ENCODE measurements at regions of chr6 and their contacts with region 1.

Region 1: GRCh38 chr6:136226027-136226673 is 24.0 kb downstream of the MTFR2 start:
- DNase-seq: peak; percentile 70
- ATAC-seq: peak; percentile 82
- H3K4me3 Mint-ChIP-seq: no peak overlapping the region
- H3K27ac Mint-ChIP-seq: no peak overlapping the region
- H3K4me1 Mint-ChIP-seq: peaks cover 8% of the 10 kb centered on the region
- H3K27me3 Mint-ChIP-seq: no peaks in the 10 kb centered on the region

Region 2: DNA sequence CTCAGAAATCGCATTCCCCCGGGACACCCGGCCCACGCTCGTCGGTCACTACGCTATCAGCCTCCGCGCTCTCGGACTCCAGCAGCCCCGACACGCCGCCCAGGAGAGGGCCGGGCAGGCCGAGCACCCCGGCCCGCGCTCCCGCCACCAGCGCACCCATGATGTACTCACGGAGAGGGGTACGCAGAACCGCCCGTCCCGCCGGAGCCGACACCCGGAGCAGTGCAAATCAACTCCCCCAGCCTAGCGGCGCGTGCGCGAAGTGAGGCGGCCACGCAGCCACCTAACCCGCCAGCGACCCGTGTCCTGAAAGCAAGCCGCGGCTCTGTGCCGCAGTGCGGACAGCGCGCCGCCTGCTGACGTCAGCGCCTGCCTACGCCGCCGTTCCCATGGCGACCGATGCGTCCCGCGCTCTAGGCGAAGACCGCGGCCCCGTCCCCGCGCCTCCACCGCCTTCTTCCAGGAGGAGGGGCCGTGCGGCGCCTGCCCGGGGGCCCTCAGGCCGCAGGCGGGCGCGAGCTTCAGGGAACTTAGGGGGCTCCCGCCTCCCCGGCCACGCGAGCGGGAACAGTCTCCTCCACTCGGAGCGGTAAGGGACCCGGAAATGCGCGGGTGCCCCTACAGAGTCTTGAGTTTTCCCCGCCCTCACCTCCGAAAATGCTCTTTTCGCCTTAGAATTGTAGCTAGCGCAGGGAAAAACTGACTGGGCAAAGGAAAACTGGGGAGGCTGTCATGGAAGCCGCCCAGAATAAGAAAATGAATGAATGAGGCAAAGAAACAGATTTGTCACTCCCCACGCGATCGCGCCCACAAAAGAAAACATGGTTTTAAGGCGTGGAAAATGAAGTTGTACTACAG is 728.5 kb before region 1 on chr6 and contains the start of gene AHI1:
- CTCF ChIA-PET with region 1: interaction called, 16 read pairs
- POLR2A ChIA-PET with region 1: no interaction called
- DNase-seq: peak; percentile 88
- ATAC-seq: peak; percentile 84
- H3K4me3 Mint-ChIP-seq: no peak within 1 kb of the TSS
- H3K27ac Mint-ChIP-seq: no peak within 1 kb of the TSS
- H3K4me1 Mint-ChIP-seq: peaks cover 12% of the 10 kb centered on the region
- H3K27me3 Mint-ChIP-seq: peaks cover 2% of the 10 kb centered on the region
- total RNA-seq, gene AHI1: 10.9 to 13.8 TPM

Region 3: GRCh38 chr6:135535989-135536414 is 690.1 kb before region 1 on chr6:
- CTCF ChIA-PET with region 1: interaction called, 43 read pairs
- POLR2A ChIA-PET with region 1: interaction called, 4 read pairs
- DNase-seq: peak; percentile 48
- ATAC-seq: peak; percentile 72
- H3K4me3 Mint-ChIP-seq: peak overlapping the region; percentile 46
- H3K27ac Mint-ChIP-seq: peak overlapping the region; percentile 43
- H3K4me1 Mint-ChIP-seq: peaks cover 45% of the 10 kb centered on the region
- H3K27me3 Mint-ChIP-seq: no peaks in the 10 kb centered on the region

Region 4: GRCh38 chr6:135909737-135910387 is 316.3 kb before region 1 on chr6:
- CTCF ChIA-PET with region 1: interaction called, 16 read pairs
- POLR2A ChIA-PET with region 1: no interaction called
- DNase-seq: peak; percentile 77
- ATAC-seq: peak; percentile 96
- H3K4me3 Mint-ChIP-seq: no peak overlapping the region
- H3K27ac Mint-ChIP-seq: no peak overlapping the region
- H3K4me1 Mint-ChIP-seq: peaks cover 5% of the 10 kb centered on the region
- H3K27me3 Mint-ChIP-seq: no peaks in the 10 kb centered on the region

Region 5: DNA sequence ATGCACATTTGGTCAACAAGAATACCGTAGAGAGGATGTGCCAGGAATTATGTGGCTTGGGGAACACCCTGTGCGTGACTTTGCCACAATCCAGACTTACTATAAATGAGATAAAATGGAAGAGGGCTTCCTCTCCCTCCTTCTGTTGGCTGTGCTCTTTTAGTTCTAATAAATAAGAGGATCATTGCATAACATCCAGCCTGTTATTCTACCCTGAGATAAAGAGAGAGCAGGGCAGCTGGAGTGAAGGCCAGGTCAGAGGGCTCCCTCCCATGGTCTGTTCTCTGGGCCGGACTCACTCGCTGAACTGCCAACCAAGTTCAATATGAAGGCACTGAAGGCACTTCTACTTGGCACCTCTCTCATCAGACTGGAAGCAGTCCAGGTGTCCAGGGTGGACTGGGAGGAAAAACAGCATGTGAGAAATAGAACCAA is 67.7 kb before region 1 on chr6:
- CTCF ChIA-PET with region 1: no interaction called
- POLR2A ChIA-PET with region 1: no interaction called
- DNase-seq: no peak
- ATAC-seq: no peak
- H3K4me3 Mint-ChIP-seq: no peak overlapping the region
- H3K27ac Mint-ChIP-seq: no peak overlapping the region
- H3K4me1 Mint-ChIP-seq: no peaks in the 10 kb centered on the region
- H3K27me3 Mint-ChIP-seq: no peaks in the 10 kb centered on the region

Region 6: GRCh38 chr6:136213012-136213539 is 13.1 kb before region 1 on chr6:
- CTCF ChIA-PET with region 1: interaction called, 12 read pairs
- POLR2A ChIA-PET with region 1: no interaction called
- DNase-seq: no peak
- ATAC-seq: no peak
- H3K4me3 Mint-ChIP-seq: no peak overlapping the region
- H3K27ac Mint-ChIP-seq: no peak overlapping the region
- H3K4me1 Mint-ChIP-seq: no peaks in the 10 kb centered on the region
- H3K27me3 Mint-ChIP-seq: no peaks in the 10 kb centered on the region

Region 7: GRCh38 chr6:136249811-136250685 is 23.9 kb after region 1 on chr6 and contains the start of gene MTFR2:
- CTCF ChIA-PET with region 1: interaction called, 25 read pairs
- POLR2A ChIA-PET with region 1: no interaction called
- DNase-seq: peak; percentile 97
- ATAC-seq: peak; percentile 92
- H3K4me3 Mint-ChIP-seq: peak within 1 kb of the TSS; percentile 92
- H3K27ac Mint-ChIP-seq: peak within 1 kb of the TSS; percentile 94
- H3K4me1 Mint-ChIP-seq: peaks cover 48% of the 10 kb centered on the region
- H3K27me3 Mint-ChIP-seq: no peaks in the 10 kb centered on the region
- total RNA-seq, gene MTFR2: 27.2 to 27.9 TPM